ENCODE measurements at regions of chr4 and their contacts with region 1.

Region 1: GRCh38 chr4:38768968-38769394 is 13.8 kb downstream of the TLR10 start:
- DNase-seq: no peak
- H3K4me3 Mint-ChIP-seq: no peak overlapping the region
- H3K27ac Mint-ChIP-seq: no peak overlapping the region
- H3K4me1 Mint-ChIP-seq: no peaks in the 10 kb centered on the region
- H3K27me3 Mint-ChIP-seq: no peaks in the 10 kb centered on the region

Region 2: DNA sequence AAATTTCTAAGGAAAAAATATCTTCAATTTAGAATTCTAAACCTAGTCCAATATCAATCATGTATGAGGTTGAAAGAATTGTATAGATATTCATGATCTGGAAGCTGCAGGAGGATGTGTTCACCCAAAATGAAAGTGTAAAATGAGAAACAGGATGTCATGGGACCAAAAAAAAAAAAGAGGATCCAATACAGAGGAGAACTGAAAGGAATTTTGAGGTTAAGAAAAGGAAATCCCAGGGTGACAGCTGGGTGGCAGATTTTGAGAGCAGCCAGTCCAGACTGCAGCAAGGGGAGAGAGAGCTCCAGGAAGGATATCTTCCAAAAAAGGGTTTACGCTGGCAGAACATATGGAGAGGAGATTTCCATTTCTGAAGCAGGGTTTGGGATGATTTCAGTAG is 25.1 kb before region 1 on chr4:
- CTCF ChIA-PET with region 1: no interaction called
- intact Hi-C with region 1: loop called (anchors 1 kb)
- DNase-seq: no peak
- H3K4me3 Mint-ChIP-seq: no peak overlapping the region
- H3K27ac Mint-ChIP-seq: no peak overlapping the region
- H3K4me1 Mint-ChIP-seq: peaks cover 8% of the 10 kb centered on the region
- H3K27me3 Mint-ChIP-seq: peaks cover 4% of the 10 kb centered on the region

Region 3: DNA sequence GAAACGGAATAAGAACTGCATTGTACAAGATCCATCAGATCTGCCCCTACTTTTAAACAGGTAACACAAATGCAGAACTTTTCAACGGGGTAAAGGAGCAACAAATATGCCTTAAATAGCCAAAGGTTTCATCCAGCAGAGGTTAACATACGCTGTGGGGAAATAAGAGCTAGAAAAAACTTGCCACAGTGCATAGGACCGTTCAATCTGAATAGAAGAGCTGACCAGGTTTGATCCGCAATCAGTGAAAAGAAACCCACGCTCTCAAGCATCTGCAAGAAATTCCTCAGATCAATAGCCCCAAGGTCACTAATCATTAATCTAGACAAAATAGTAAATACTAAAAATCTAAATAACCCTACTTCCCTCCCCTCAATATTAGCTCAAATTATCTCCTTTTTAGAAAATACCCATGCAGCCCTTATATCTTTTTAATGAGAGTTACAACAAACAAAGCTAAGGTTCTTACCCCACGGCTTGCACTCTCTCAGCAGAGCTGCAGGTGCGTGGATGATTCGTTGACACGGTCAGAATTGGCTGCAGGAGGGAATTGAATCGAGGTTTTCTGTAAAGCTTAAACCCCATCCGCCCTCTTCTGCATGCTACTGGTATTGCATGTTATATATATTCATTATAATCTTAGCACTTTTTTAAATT is 13.6 kb after region 1 on chr4 and contains the start of gene TLR10:
- CTCF ChIA-PET with region 1: interaction called, 24 read pairs
- intact Hi-C with region 1: no loop called
- DNase-seq: peak; percentile 57
- H3K4me3 Mint-ChIP-seq: no peak within 1 kb of the TSS
- H3K27ac Mint-ChIP-seq: no peak within 1 kb of the TSS
- H3K4me1 Mint-ChIP-seq: peaks cover 4% of the 10 kb centered on the region
- H3K27me3 Mint-ChIP-seq: no peaks in the 10 kb centered on the region
- total RNA-seq, gene TLR10: 0.12 to 0.17 TPM

Region 4: GRCh38 chr4:39044364-39044955 is 275.5 kb after region 1 on chr4:
- CTCF ChIA-PET with region 1: no interaction called
- intact Hi-C with region 1: loop called (anchors 10 kb)
- DNase-seq: peak; percentile 99
- H3K4me3 Mint-ChIP-seq: peak overlapping the region; percentile 83
- H3K27ac Mint-ChIP-seq: peak overlapping the region; percentile 92
- H3K4me1 Mint-ChIP-seq: peaks cover 51% of the 10 kb centered on the region
- H3K27me3 Mint-ChIP-seq: no peaks in the 10 kb centered on the region

Measured in activated naive CD4-positive, alpha-beta T cell treated with anti-CD3 and anti-CD28 coated beads for 36 hours (primary cell).